ENCODE measurements at regions of chr4 and their contacts with region 1.

Region 1: GRCh38 chr4:165378745-165379677 is at the start of gene CPE:
- DNase-seq: peak; percentile 81
- H3K4me3 Mint-ChIP-seq: peak within 1 kb of the TSS; percentile 70
- H3K27ac Mint-ChIP-seq: no peak within 1 kb of the TSS
- H3K4me1 Mint-ChIP-seq: no peaks in the 10 kb centered on the region
- H3K27me3 Mint-ChIP-seq: peaks cover 19% of the 10 kb centered on the region
- total RNA-seq, gene CPE: 0.10 TPM in 1 of 2 experiments, not detected in the other

Region 2: GRCh38 chr4:165112368-165113139 is 266.5 kb before region 1 on chr4 and contains the start of gene TMEM192:
- CTCF ChIA-PET with region 1: interaction called, 5 read pairs
- intact Hi-C with region 1: loop called (anchors 1 kb)
- DNase-seq: peak; percentile 93
- H3K4me3 Mint-ChIP-seq: peak within 1 kb of the TSS; percentile 94
- H3K27ac Mint-ChIP-seq: peak within 1 kb of the TSS; percentile 74
- H3K4me1 Mint-ChIP-seq: peaks cover 13% of the 10 kb centered on the region
- H3K27me3 Mint-ChIP-seq: no peaks in the 10 kb centered on the region
- total RNA-seq, gene TMEM192: 6.3 to 8.9 TPM

Region 3: DNA sequence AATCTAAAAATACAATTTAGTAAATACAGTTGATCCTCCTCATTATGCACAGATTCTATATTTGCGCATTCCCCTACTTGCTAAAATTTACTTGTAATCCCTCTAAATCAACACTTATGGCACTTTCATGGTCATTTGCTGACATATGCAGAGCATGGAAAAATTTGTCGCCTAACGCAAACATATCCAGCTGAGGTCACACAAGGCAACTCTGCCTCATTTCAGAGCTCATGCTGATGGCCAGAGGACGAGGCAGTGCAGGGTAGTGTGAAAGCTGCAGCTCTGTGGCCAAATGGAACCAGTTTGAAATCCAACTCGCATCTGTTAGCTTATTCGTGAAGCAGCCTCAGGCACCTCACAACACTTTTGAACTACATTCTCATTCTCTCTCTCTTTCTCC is 211.4 kb before region 1 on chr4:
- CTCF ChIA-PET with region 1: no interaction called
- intact Hi-C with region 1: no loop called
- DNase-seq: no peak
- H3K4me3 Mint-ChIP-seq: no peak overlapping the region
- H3K27ac Mint-ChIP-seq: no peak overlapping the region
- H3K4me1 Mint-ChIP-seq: no peaks in the 10 kb centered on the region
- H3K27me3 Mint-ChIP-seq: no peaks in the 10 kb centered on the region

Region 4: GRCh38 chr4:165355900-165356300 is 23.1 kb before region 1 on chr4:
- CTCF ChIA-PET with region 1: interaction called, 4 read pairs
- intact Hi-C with region 1: loop called (anchors 2 kb)
- DNase-seq: peak; percentile 29
- H3K4me3 Mint-ChIP-seq: no peak overlapping the region
- H3K27ac Mint-ChIP-seq: no peak overlapping the region
- H3K4me1 Mint-ChIP-seq: no peaks in the 10 kb centered on the region
- H3K27me3 Mint-ChIP-seq: peaks cover 15% of the 10 kb centered on the region

Measured in activated naive CD4-positive, alpha-beta T cell treated with anti-CD3 and anti-CD28 coated beads for 36 hours (primary cell).